Activated naive CD8-positive, alpha-beta T cell treated with anti-CD3 and anti-CD28 coated beads, Interleukin-2, amount 10 ng/mL, durations not matched to agents 7 days and 5 days (primary cell): ENCODE measurements at regions of chr5 and their contacts with region 1.

Region 1: GRCh38 chr5:62305715-62306322 is at the start of gene KIF2A:
- DNase-seq: peak; percentile 97
- ATAC-seq: peak; percentile 93
- H3K4me3 Mint-ChIP-seq: peak within 1 kb of the TSS; percentile 95
- H3K27ac Mint-ChIP-seq: peak within 1 kb of the TSS; percentile 93
- H3K4me1 Mint-ChIP-seq: peaks cover 42% of the 10 kb centered on the region
- H3K27me3 Mint-ChIP-seq: no peaks in the 10 kb centered on the region
- total RNA-seq, gene KIF2A: 161 to 171 TPM

Region 2: DNA sequence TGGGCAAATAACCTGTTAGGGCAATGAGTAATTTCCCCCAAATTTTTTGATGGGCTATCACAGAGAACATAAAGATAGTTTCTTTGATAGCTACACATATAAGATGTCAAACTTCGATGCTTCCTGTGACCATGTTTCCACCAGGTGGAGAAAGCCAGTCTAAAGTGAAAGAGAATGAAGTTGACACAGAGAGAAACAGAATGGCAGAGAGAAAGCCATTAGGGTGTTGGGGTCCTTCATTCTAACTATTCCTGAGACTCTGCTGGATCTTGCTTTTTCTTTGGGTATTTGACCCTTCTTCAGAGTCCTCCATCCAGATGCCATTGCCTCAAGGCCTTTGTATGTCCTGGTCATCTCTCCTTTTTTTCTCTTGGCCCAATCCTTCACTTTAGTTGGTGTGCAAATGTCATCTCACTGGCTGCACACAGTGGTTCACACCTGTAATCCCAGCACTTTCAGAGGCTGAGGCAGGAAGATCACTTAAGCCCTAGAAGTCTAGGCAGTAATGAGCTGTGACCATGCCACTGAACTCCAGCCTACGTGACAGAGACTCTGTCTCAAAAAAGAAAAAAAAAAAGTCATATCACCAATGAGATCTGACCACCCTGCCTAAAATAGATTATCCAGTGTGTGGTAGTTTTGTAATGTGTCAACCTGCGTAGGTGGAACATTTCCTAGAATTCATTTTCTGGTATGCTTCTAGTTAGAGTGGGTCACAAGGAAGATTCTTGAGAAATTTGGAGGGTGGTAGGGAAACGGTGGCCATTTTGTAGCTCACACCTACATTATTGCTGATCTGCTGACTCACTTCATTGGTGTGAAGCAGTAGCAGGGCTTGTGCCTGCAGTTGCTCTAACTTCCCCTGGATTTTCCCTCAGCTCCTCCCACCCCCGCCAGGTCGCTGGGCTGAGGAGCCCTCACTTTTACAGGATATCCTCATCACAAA is 20.6 kb before region 1 on chr5:
- POLR2A ChIA-PET with region 1: interaction called, 27 read pairs
- DNase-seq: peak; percentile 54
- ATAC-seq: peak; percentile 85
- H3K4me3 Mint-ChIP-seq: peak overlapping the region; percentile 67
- H3K27ac Mint-ChIP-seq: peak overlapping the region; percentile 98
- H3K4me1 Mint-ChIP-seq: peaks cover 47% of the 10 kb centered on the region
- H3K27me3 Mint-ChIP-seq: no peaks in the 10 kb centered on the region

Region 3: GRCh38 chr5:62403434-62404250 is 97.8 kb after region 1 on chr5 and contains the start of gene DIMT1:
- POLR2A ChIA-PET with region 1: interaction called, 32 read pairs
- DNase-seq: peak; percentile 91
- ATAC-seq: peak; percentile 94
- H3K4me3 Mint-ChIP-seq: peak within 1 kb of the TSS; percentile 92
- H3K27ac Mint-ChIP-seq: peak within 1 kb of the TSS; percentile 95
- H3K4me1 Mint-ChIP-seq: peaks cover 24% of the 10 kb centered on the region
- H3K27me3 Mint-ChIP-seq: no peaks in the 10 kb centered on the region
- total RNA-seq, gene DIMT1: 26.9 to 29.0 TPM